AG04450 (cell line): ENCODE measurements at regions of chr19 and their contacts with region 1.

Region 1: GRCh38 chr19:10403137-10404021 is at the start of gene CDC37:
- DNase-seq: peak; percentile 91
- H3K4me3 ChIP-seq: peak within 1 kb of the TSS; percentile 99
- H3K27ac ChIP-seq: peak within 1 kb of the TSS; percentile 81
- H3K27me3 ChIP-seq: no peaks in the 10 kb centered on the region
- CTCF ChIP-seq: no peak
- polyA plus RNA-seq, gene CDC37: 268 and 340 TPM in 2 replicates

Region 2: DNA sequence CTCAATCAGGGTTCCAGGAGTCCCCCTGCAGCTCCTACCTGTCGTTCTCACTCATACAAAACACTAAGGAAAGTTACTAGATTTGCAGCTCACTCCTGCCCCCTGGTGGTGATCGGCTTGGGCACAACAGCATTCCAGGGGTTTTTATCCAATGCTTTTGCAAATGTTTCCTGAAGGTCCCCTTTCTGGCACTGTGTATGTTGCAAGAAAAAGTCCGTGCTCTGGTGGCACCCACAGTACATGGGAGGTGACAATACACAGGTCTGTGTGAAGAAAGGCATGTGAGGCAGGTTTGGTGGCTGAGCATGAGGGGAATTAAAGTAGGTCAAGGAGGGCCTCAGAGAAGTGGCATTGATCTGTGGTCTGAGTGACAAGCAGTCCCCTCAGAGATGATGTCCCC is 14.4 kb before region 1 on chr19:
- CTCF ChIA-PET with region 1: interaction called, 18 read pairs
- POLR2A ChIA-PET with region 1: no interaction called
- DNase-seq: peak; percentile 50
- H3K4me3 ChIP-seq: no peak overlapping the region
- H3K27ac ChIP-seq: peak overlapping the region; percentile 11
- H3K27me3 ChIP-seq: no peaks in the 10 kb centered on the region
- CTCF ChIP-seq: peak; percentile 96

Region 3: DNA sequence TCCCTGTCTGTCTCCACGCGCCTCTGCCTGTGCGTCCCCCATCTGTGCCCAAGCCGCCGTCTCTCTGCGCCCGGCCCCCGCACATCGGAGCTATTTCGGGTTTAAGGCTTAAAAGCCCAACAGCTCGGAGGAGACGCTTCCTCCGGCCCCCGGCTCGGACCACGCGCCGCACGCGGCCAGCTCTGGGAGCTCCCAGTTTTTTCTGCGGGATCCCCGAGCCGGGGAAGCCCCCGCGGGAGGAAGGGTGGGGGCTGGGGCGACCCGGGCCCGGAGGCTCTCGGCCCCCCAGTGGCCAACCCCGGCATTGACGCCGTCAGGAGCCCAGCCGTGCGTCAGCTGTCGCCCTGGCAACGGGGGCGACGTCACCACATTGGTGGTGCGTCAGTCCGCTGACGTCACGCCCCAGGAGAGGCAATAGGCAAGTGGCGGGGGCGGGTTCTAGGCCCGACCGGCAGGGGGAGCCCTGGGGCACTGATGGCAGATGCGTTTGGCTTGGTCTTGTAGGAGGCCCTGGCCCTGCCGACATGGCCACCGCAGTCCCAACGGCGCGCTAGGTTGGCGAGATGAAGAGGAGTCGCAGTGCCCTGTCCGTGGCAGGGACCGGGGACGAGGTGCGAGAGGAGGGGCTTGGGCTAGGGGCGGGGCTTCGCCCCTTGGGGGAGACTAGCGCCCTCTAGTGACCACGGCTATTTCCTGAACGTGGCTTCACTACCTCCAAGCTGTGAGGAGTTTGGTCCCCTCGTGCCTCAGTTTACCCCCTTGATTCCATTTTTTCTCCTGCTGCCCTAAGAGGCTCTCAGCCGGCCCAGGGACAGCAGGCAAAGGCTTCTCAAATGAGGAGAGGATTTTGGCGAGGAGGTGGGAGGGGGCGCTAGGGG is 13.2 kb after region 1 on chr19:
- CTCF ChIA-PET with region 1: interaction called, 87 read pairs
- POLR2A ChIA-PET with region 1: interaction called, 7 read pairs
- DNase-seq: peak; percentile 72
- H3K4me3 ChIP-seq: peak overlapping the region; percentile 67
- H3K27ac ChIP-seq: peak overlapping the region; percentile 31
- H3K27me3 ChIP-seq: peaks cover 8% of the 10 kb centered on the region
- CTCF ChIP-seq: peak; percentile 74

Region 4: DNA sequence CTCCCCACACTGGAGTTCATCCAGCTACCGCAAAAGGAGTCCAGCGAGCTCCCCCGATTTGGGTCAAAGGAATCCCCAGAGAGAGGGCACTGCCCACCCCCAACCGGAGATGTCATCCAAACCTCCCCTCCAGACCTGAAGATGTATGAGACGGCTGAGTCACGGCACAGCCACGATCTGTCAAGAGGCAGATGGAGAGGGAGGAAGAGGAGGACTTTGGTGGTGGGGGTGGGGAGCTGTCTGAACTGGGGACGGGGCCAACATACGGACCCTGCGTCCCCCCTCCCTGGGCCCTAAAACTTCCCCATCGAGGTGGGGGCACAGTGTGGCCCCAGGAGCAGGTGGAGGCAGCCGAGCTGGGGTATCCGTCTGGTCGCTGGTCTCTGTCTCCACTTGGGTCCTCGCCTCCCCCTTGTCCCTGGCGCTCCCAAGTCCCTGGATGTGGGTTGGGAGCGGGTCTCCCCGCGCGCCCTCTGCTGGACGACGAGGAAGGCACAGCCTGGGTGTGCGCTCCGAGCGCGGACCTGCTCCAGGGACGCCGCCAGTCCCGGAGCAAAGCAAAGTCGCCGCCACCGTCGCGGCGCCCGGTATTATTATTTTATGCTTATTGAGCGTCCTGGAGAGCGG is 20.7 kb after region 1 on chr19:
- CTCF ChIA-PET with region 1: interaction called, 87 read pairs
- POLR2A ChIA-PET with region 1: interaction called, 4 read pairs
- DNase-seq: no peak
- H3K4me3 ChIP-seq: peak overlapping the region; percentile 58
- H3K27ac ChIP-seq: no peak overlapping the region
- H3K27me3 ChIP-seq: peaks cover 7% of the 10 kb centered on the region
- CTCF ChIP-seq: peak; percentile 82

Region 5: DNA sequence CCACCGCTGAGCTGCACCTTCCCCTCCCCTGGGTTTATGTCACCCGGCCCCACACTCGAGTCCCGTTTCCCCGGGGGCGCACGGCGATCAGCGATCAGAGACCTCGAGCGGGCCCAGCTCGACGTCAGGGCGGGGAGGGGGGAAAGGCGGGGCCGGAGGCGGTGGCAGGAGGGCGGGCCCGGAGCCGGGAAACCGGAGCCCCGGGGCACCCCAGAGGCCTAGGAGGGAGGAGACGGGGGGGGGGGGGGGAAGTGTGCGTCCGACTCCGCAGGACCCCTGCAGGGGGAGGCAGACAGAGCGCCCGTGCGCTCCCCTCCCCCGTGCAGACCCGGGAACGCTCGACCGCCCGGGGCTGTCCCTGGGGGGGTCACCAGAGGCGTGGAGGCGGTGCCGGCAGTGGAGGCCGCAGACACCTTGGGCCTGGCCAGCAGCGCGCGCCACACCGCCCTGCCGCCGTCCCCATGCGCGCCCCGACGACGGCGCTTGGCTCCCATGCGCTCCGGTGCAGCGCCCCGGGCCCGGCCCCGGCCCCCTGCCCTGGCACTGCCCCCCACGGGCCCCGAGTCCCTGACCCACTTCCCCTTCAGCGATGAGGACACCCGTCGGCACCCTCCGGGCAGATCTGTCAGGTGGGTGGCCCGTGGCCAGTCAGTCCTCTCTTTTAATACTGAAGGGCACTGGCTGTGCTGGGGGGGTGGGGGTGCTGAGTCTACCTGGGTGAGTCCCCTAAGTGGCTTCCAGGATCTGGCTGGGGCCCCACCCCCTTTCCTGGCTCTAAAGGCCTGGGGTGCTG is 28.8 kb after region 1 on chr19:
- CTCF ChIA-PET with region 1: interaction called, 14 read pairs
- POLR2A ChIA-PET with region 1: no interaction called
- DNase-seq: no peak
- H3K4me3 ChIP-seq: peak overlapping the region; percentile 68
- H3K27ac ChIP-seq: no peak overlapping the region
- H3K27me3 ChIP-seq: peaks cover 3% of the 10 kb centered on the region
- CTCF ChIP-seq: no peak